ENCODE measurements at regions of chr16 and their contacts with region 1.

Region 1: GRCh38 chr16:48353565-48354163 is 31.5 kb downstream of the SIAH1 start:
- DNase-seq: peak; percentile 80
- H3K4me3 ChIP-seq: no peak overlapping the region
- H3K27ac ChIP-seq: no peak overlapping the region
- H3K4me1 ChIP-seq: no peaks in the 10 kb centered on the region
- CTCF ChIP-seq: peak; percentile 96

Region 2: DNA sequence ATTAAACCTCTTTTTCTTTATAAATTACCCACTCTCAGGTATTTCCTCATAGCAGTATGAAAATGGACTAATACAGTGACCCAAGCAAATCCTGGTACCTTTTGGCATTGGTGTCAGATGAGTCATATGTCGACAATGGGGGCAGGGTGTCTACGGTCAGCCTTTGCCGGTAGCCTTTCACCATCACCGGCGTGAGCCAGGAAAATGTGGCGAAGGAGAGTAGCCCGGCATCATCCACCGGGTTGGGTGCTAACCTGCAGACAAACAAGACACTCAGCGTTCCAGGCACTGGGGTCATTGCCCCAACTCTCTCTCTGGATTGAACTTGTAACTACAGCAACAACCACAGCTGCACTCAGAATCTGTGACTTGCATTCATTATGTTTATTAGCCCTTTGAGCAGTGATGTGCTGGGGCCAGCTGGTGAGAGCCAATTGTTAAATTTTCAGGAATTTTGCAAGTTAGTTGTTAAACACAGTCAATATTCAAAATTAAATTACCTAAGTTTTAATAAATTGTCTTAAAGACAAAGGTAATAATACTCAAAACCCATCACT is 209.8 kb before region 1 on chr16:
- CTCF ChIA-PET with region 1: no interaction called
- POLR2A ChIA-PET with region 1: no interaction called
- intact Hi-C with region 1: no loop called
- DNase-seq: no peak
- H3K4me3 ChIP-seq: no peak overlapping the region
- H3K27ac ChIP-seq: no peak overlapping the region
- H3K4me1 ChIP-seq: no peaks in the 10 kb centered on the region
- CTCF ChIP-seq: no peak

Region 3: GRCh38 chr16:48432136-48432535 is 78.5 kb after region 1 on chr16:
- CTCF ChIA-PET with region 1: no interaction called
- POLR2A ChIA-PET with region 1: interaction called, 3 read pairs
- intact Hi-C with region 1: loop called (anchors 2 kb)
- DNase-seq: peak; percentile 84
- H3K4me3 ChIP-seq: peak overlapping the region; percentile 38
- H3K27ac ChIP-seq: peak overlapping the region; percentile 71
- H3K4me1 ChIP-seq: peaks cover 52% of the 10 kb centered on the region
- CTCF ChIP-seq: no peak

Region 4: GRCh38 chr16:48526058-48526957 is 172.6 kb after region 1 on chr16:
- CTCF ChIA-PET with region 1: no interaction called
- POLR2A ChIA-PET with region 1: no interaction called
- intact Hi-C with region 1: loop called (anchors 1 kb)
- DNase-seq: peak; percentile 58
- H3K4me3 ChIP-seq: no peak overlapping the region
- H3K27ac ChIP-seq: no peak overlapping the region
- H3K4me1 ChIP-seq: peaks cover 6% of the 10 kb centered on the region
- CTCF ChIP-seq: peak; percentile 65

Region 5: GRCh38 chr16:48542020-48542473 is 188.4 kb after region 1 on chr16:
- CTCF ChIA-PET with region 1: no interaction called
- POLR2A ChIA-PET with region 1: no interaction called
- intact Hi-C with region 1: loop called (anchors 5 kb)
- DNase-seq: peak; percentile 38
- H3K4me3 ChIP-seq: no peak overlapping the region
- H3K27ac ChIP-seq: no peak overlapping the region
- H3K4me1 ChIP-seq: no peaks in the 10 kb centered on the region
- CTCF ChIP-seq: peak; percentile 68

Region 6: GRCh38 chr16:48623304-48624016 is 269.8 kb after region 1 on chr16:
- CTCF ChIA-PET with region 1: no interaction called
- POLR2A ChIA-PET with region 1: interaction called, 4 read pairs
- intact Hi-C with region 1: loop called (anchors 1 kb)
- DNase-seq: peak; percentile 73
- H3K4me3 ChIP-seq: peak overlapping the region; percentile 46
- H3K27ac ChIP-seq: no peak overlapping the region
- H3K4me1 ChIP-seq: peaks cover 8% of the 10 kb centered on the region
- CTCF ChIP-seq: peak; percentile 94

Region 7: DNA sequence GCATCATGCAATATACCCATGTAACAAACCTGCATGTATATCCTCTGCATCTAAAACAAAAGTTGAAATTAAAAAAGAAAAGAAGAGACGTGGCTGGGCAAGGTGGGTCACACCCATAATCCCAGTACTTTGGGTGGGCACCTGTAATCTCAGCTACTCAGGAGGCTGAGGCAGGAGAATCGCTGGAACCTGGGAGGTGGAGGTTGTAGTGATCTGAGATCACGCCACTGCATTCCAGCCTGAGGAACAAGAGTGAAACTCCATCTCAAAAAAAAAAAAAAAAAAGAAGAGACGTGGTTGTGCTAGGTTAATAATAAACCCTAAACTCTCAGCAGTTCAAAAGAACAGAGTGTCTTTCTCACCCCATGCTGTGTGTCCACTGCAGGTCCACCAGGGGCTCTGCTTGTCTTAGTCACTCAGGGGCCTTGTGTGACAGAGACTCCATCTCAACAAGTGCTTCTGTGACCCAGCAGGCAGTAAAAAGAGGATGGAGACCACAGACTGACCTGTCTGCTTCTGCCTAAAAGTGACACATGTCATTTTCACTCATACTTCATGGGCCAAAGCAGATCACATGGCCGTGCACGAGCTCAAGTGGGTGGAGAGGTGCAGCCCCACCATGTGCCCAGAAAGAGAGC is 278.6 kb after region 1 on chr16:
- CTCF ChIA-PET with region 1: no interaction called
- POLR2A ChIA-PET with region 1: no interaction called
- intact Hi-C with region 1: loop called (anchors 1 kb)
- DNase-seq: no peak
- H3K4me3 ChIP-seq: no peak overlapping the region
- H3K27ac ChIP-seq: no peak overlapping the region
- H3K4me1 ChIP-seq: no peaks in the 10 kb centered on the region
- CTCF ChIP-seq: no peak

Measured in OCI-LY7 (cell line).